A673 (cell line): ENCODE measurements at regions of chr13 and their contacts with region 1.

Region 1: GRCh38 chr13:96020155-96020575 is 33.0 kb downstream of the UGGT2 start:
- DNase-seq: peak; percentile 65
- H3K4me3 ChIP-seq: no peak overlapping the region
- H3K27ac ChIP-seq: no peak overlapping the region
- H3K4me1 ChIP-seq: no peaks in the 10 kb centered on the region
- H3K27me3 ChIP-seq: no peaks in the 10 kb centered on the region
- CTCF ChIP-seq: peak; percentile 70

Region 2: GRCh38 chr13:94860981-94861407 is 1159.2 kb before region 1 on chr13:
- CTCF ChIA-PET with region 1: no interaction called
- POLR2A ChIA-PET with region 1: no interaction called
- intact Hi-C with region 1: no loop called
- DNase-seq: peak; percentile 32
- H3K4me3 ChIP-seq: peak overlapping the region; percentile 35
- H3K27ac ChIP-seq: no peak overlapping the region
- H3K4me1 ChIP-seq: peaks cover 5% of the 10 kb centered on the region
- H3K27me3 ChIP-seq: peaks cover 48% of the 10 kb centered on the region
- CTCF ChIP-seq: no peak

Region 3: DNA sequence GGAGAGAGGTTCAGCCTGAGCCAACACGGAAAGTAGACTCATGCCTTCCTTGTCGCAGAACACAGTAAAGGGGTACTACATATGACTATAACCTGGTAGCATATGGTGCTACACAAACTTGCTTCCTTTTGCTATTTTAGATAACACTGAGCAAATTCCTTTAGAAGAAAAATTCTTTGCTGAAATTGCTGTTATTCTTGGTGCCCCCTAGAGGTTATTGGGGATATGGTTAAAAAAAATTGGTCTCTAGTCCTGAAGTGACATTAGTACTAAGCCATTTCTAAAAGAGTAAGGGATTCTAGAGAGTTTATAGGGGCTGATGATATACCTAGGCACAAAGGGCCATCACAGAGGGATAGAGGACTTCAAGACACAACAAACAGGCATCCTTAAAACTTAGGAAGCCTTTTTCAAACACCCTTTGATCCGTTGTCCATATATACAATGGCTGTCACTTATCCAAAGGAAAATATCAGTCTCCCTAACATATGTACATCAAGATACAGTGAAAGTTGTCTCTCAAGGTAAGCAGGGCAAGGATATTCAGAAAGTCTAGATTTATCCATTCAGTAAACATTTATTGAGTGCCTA is 55.9 kb after region 1 on chr13:
- CTCF ChIA-PET with region 1: interaction called, 4 read pairs
- POLR2A ChIA-PET with region 1: no interaction called
- intact Hi-C with region 1: loop called (anchors 2 kb)
- DNase-seq: peak; percentile 41
- H3K4me3 ChIP-seq: no peak overlapping the region
- H3K27ac ChIP-seq: no peak overlapping the region
- H3K4me1 ChIP-seq: no peaks in the 10 kb centered on the region
- H3K27me3 ChIP-seq: peaks cover 33% of the 10 kb centered on the region
- CTCF ChIP-seq: peak; percentile 68

Region 4: DNA sequence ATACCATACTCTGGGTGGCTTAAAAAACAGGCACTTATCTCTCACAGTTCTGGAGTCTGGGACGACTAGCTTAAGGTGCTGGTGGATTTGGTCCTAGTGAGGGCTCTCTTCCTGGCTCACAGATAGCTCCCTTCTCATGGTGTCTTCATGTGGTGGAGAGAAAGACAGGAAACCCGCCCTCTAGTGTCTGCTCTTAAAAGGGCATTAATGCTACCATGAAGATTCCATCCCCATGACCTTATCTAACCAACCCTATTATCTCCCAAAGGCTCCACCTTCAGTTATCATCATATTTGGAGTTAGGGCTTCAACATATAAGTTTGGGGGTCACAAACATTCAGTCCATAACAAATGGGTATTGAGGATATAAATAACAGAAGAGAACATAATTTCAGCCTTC is 209.2 kb after region 1 on chr13:
- CTCF ChIA-PET with region 1: interaction called, 10 read pairs
- POLR2A ChIA-PET with region 1: no interaction called
- intact Hi-C with region 1: loop called (anchors 1 kb)
- DNase-seq: peak; percentile 54
- H3K4me3 ChIP-seq: no peak overlapping the region
- H3K27ac ChIP-seq: no peak overlapping the region
- H3K4me1 ChIP-seq: no peaks in the 10 kb centered on the region
- H3K27me3 ChIP-seq: no peaks in the 10 kb centered on the region
- CTCF ChIP-seq: peak; percentile 68

Region 5: GRCh38 chr13:96817336-96817941 is 797.3 kb after region 1 on chr13:
- CTCF ChIA-PET with region 1: interaction called, 19 read pairs
- POLR2A ChIA-PET with region 1: no interaction called
- intact Hi-C with region 1: loop called (anchors 2 kb)
- DNase-seq: peak; percentile 22
- H3K4me3 ChIP-seq: no peak overlapping the region
- H3K27ac ChIP-seq: no peak overlapping the region
- H3K4me1 ChIP-seq: no peaks in the 10 kb centered on the region
- H3K27me3 ChIP-seq: no peaks in the 10 kb centered on the region
- CTCF ChIP-seq: peak; percentile 66

Region 6: GRCh38 chr13:96958286-96958891 is 938.2 kb after region 1 on chr13:
- CTCF ChIA-PET with region 1: no interaction called
- POLR2A ChIA-PET with region 1: no interaction called
- intact Hi-C with region 1: loop called (anchors 2 kb)
- DNase-seq: peak; percentile 59
- H3K4me3 ChIP-seq: no peak overlapping the region
- H3K27ac ChIP-seq: no peak overlapping the region
- H3K4me1 ChIP-seq: no peaks in the 10 kb centered on the region
- H3K27me3 ChIP-seq: peaks cover 5% of the 10 kb centered on the region
- CTCF ChIP-seq: peak; percentile 77